ENCODE measurements at regions of chr10 and their contacts with region 1.

Region 1: DNA sequence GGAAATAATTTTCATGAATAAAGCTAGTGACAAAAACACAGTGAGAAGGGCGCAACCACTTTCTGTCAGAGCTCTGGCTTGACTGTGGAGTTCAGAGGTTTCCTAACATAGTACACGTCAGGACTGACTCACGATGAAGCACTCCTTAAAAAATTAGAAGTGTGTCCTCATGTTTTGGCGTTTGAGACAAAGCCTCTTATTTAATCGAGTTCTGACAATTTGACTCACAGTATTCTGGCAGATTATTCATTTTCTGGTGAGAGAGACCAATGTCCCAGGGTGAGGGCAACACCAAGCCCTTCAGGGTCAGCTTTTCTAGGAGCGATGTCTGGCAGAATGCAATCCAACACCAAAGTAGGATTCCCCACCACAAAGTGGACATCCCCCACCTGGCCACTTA is 108.7 kb downstream of the DIP2C start:
- DNase-seq: peak in 1 of 10 donors; percentile 6

Region 2: GRCh38 chr10:551141-551970 is 29.4 kb before region 1 on chr10:
- intact Hi-C with region 1: loop called (anchors 1 kb)
- DNase-seq: no peak

Region 3: GRCh38 chr10:707861-708260 is 127.1 kb after region 1 on chr10:
- intact Hi-C with region 1: no loop called
- DNase-seq: no peak